Psoas muscle (tissue), 8 donors: ENCODE measurements at regions of chr10 and their contacts with region 1.

Region 1: GRCh38 chr10:132023092-132023811 is 41.5 kb upstream of the BNIP3 start:
- DNase-seq: peak; percentile 84 to 92
- ATAC-seq: peak; percentile 93 to 99 (median 96)
- H3K4me3 ChIP-seq: peak overlapping the region; percentile 63
- H3K27ac ChIP-seq: no peak overlapping the region
- H3K4me1 ChIP-seq: no peaks in the 10 kb centered on the region
- H3K27me3 ChIP-seq: peaks cover 0 to 22% (median 0%) of the 10 kb centered on the region in 3 donors
- CTCF ChIP-seq: peak; percentile 94

Region 2: DNA sequence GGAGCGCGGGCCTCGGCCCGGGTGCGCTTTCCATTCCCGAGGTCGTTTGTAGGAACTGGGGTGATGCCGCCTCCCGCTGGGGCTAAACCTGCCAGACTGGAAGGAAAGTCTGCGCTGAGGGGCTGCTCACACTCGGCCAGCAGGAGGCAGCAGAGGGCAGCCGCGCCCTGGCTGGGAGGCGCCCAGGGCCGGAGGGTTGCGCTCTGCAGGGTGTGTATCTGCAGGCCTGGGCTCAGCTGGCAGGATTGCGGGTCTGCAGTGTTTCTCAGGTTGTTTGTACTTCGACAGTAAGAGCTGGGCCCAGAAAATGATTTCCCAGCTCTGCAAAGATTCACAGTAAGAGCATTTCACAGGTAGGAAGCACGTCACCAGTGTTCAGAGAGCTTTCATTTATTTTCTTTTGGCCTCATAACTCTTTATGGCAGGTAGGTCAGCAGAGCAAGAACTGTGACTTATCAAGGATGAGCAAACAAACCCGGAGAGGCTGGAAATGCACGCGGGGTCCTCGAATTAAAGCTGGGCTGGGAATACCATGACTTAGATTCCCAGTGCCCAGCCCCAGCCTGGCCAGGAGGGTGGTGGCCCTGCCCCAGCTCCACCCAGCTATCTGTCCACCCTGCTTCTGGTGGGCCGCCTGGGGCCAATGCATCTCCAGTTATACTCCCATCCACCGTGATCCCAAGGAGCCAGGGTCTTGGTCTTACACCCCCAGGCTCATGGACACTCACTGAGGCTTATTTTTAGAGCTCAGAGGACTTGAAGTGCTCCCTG is 137.7 kb before region 1 on chr10:
- intact Hi-C with region 1: loop called (anchors 1 to 2 kb)
- DNase-seq: peak; percentile 77 to 89
- ATAC-seq: peak; percentile 96 to 100 (median 98)
- H3K4me3 ChIP-seq: no peak overlapping the region
- H3K27ac ChIP-seq: no peak overlapping the region
- H3K4me1 ChIP-seq: no peaks in the 10 kb centered on the region
- H3K27me3 ChIP-seq: peaks cover 0 to 6% (median 3%) of the 10 kb centered on the region in 3 donors
- CTCF ChIP-seq: peak; percentile 98

Region 3: GRCh38 chr10:131981429-131982184 is 41.6 kb before region 1 on chr10 and contains the start of gene BNIP3:
- intact Hi-C with region 1: loop called in 1 of 2 experiments (anchors 2 kb)
- DNase-seq: peak; percentile 97 to 98
- ATAC-seq: peak; percentile 87 to 94 (median 88)
- H3K4me3 ChIP-seq: peak within 1 kb of the TSS; percentile 91
- H3K27ac ChIP-seq: peak within 1 kb of the TSS; percentile 86
- H3K4me1 ChIP-seq: peaks cover 21% of the 10 kb centered on the region
- H3K27me3 ChIP-seq: no peaks in the 10 kb centered on the region
- CTCF ChIP-seq: peak; percentile 21
- total RNA-seq, gene BNIP3: 93.5 to 165 (median 151) TPM

Region 4: GRCh38 chr10:132078746-132079345 is 55.6 kb after region 1 on chr10:
- intact Hi-C with region 1: no loop called
- DNase-seq: peak in 1 of 2 donors; percentile 52
- ATAC-seq: peak in 3 of 4 donors; percentile 45 to 67 (median 65)
- H3K4me3 ChIP-seq: no peak overlapping the region
- H3K27ac ChIP-seq: no peak overlapping the region
- H3K4me1 ChIP-seq: no peaks in the 10 kb centered on the region
- H3K27me3 ChIP-seq: no peaks in the 10 kb centered on the region
- CTCF ChIP-seq: no peak